GM12878 (cell line): ENCODE measurements at regions of chr19 and their contacts with region 1.

Region 1: DNA sequence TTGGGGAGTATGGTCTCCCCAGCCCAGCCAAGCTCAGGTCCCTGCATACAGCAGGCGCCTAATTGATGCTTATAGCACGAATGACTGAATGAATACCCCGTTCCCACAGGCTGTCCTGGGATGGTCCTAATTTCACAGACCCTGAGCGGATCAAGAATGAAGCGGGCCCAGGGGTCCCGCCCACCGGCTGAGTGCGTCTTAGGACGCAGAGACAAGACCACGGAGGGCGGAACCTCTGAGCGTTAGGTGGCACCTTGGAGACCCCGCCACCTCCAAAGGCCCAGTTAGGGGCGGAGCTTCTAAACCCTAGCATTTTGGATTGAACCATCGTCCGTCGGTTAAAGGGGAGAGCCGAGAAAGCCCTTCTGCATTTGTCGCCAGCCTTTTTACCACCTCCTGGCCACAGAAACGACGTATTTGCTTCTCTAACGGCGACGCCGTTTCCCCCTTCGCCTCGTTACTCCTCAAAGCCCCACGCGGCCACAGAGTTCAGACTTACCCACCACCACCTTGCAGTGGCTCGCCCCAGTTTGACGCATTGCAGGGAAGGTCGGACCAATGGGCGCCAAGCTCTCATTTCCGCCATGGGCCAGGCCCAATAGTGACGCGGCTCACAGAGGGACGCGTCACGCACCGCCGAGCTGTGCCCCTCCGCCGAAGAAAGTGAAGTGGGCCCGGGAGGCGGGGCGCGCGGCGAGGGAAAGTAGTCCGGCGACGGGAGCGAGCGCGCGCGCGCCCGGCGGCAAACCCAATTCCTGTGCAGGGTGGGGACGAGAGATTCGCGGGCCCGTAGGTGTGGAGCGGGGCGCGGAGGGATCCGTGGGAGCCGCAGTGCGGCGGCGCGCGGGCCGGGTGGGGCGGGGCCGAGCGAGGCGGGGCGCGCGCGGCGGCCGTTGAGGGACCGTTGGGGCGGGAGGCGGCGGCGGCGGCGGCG is 479 bp upstream of the CALM3 start:
- DNase-seq: peak; percentile 85
- ATAC-seq: peak; percentile 81
- H3K4me3 ChIP-seq: peak overlapping the region; percentile 72
- H3K27ac ChIP-seq: peak overlapping the region; percentile 98
- H3K4me1 ChIP-seq: peaks cover 12% of the 10 kb centered on the region
- H3K27me3 ChIP-seq: no peaks in the 10 kb centered on the region
- CTCF ChIP-seq: no peak
- EP300 ChIP-seq: peak in 1 of 2 experiments; percentile 17; a peak in 1 of 4 replicates
- POLR2A ChIP-seq: peak; percentile 91
- RAD21 ChIP-seq: no peak

Region 2: DNA sequence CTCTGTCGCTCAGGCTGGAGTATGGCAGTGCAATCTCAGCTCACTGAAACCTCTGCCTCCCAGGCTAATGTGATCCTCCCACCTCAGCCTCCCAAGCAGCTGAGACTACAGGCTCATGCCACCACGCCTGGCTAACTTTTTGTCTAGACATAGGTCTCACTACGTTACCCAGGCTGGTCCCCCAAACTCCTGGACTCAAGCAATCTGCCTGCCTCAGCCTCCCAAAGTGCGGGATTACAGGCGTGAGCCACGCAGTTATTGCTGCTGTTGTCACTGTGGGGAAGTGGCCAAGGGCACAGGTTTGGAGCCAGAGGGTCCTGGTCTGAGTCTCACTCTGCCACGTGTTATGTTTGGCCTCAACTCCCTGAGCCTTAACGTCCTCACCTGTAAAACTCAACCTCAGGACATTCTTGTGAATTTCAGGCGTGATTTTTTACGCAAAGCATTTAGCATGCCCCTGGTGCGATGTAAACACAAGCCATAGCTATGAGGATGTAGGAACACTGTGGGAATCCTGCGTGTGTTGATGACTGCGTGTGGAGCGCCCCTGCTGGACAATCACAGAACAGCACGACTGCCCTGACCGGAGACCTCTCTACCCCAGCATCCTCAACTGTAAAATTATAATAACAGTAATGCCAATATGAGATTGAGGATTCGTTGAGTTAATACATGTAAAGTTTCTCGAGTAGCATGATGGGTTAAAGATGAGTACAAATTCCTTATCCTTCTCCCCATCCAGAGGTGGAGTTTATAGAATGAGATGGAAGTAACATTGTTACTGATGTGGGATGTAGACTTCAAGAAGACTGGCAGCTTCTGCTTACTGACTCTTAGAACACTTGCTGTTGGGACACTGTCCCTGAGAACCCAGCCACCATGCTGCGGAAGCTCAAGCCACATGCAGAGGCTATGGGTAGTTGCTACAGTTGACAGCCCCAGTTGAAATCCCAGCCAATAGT is 63.2 kb before region 1 on chr19:
- CTCF ChIA-PET with region 1: interaction called, 13 read pairs
- POLR2A ChIA-PET with region 1: no interaction called
- RAD21 ChIA-PET with region 1: interaction called, 3 read pairs
- SMC1A ChIA-PET with region 1: no interaction called
- in situ Hi-C with region 1: no loop called
- intact Hi-C with region 1: no loop called
- DNase-seq: no peak
- ATAC-seq: peak; percentile 85
- H3K4me3 ChIP-seq: no peak overlapping the region
- H3K27ac ChIP-seq: no peak overlapping the region
- H3K4me1 ChIP-seq: no peaks in the 10 kb centered on the region
- H3K27me3 ChIP-seq: no peaks in the 10 kb centered on the region; a peak in 3 of 4 replicates
- CTCF ChIP-seq: peak; percentile 74 to 96 (median 95)
- EP300 ChIP-seq: no peak
- POLR2A ChIP-seq: no peak
- RAD21 ChIP-seq: no peak

Region 3: GRCh38 chr19:46624958-46625661 is 24.5 kb after region 1 on chr19 and contains the start of gene PTGIR:
- CTCF ChIA-PET with region 1: interaction called, 25 read pairs
- POLR2A ChIA-PET with region 1: interaction called, 72 read pairs
- RAD21 ChIA-PET with region 1: no interaction called
- SMC1A ChIA-PET with region 1: interaction called, 83 read pairs
- in situ Hi-C with region 1: no loop called
- intact Hi-C with region 1: no loop called
- DNase-seq: no peak
- ATAC-seq: peak; percentile 70
- H3K4me3 ChIP-seq: peak within 1 kb of the TSS; percentile 71
- H3K27ac ChIP-seq: peak within 1 kb of the TSS; percentile 62
- H3K4me1 ChIP-seq: peaks cover 36% of the 10 kb centered on the region
- H3K27me3 ChIP-seq: no peaks in the 10 kb centered on the region
- CTCF ChIP-seq: no peak
- EP300 ChIP-seq: no peak
- POLR2A ChIP-seq: peak; percentile 62
- RAD21 ChIP-seq: no peak
- polyA plus RNA-seq, gene PTGIR: 0.34 to 1.5 TPM